ENCODE measurements at regions of chr5 and their contacts with region 1.

Region 1: DNA sequence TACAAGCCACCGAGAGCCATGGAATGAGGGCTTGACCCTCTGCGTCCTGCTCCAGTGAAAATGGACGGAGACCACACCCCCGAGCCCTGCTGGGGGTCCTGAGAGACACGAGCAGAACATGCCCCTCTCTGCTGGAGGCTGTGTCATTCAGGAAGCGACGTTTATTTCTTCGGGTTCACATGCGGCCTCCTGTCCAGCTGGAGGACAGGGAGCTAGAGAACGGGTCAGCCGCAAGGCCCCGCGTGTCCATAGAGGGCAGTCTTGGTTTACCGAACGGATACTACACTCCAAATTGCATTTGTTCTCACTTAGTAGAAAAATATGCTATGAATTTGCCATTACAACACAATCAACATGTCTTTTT is 36.1 kb downstream of the MRPL36 start:
- DNase-seq: peak; percentile 57 to 75
- H3K4me3 ChIP-seq: no peak overlapping the region
- H3K27ac ChIP-seq: no peak overlapping the region
- H3K4me1 ChIP-seq: no peaks in the 10 kb centered on the region
- H3K27me3 ChIP-seq: peaks cover 98% of the 10 kb centered on the region
- CTCF ChIP-seq: peak; percentile 90

Region 2: DNA sequence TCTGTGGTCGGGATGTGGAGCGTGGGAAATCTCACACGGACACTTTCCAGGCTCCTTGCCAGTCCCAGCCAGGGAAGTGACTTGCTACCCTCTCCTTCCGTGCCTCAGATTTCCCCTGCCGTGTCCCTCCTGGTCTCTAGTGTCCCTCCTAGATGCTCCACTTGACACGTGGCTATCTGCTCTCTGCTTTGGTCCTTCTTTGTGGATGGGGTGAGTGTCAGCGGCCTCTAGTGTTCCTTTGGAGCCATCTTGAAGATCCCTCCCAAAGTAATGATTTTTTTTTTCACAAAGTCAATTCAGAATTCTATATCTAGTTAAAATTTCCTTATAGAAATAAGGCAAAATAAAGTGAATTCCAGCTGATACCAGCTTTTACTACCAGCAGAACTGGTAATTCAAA is 81.6 kb before region 1 on chr5:
- CTCF ChIA-PET with region 1: no interaction called
- POLR2A ChIA-PET with region 1: no interaction called
- intact Hi-C with region 1: no loop called
- DNase-seq: no peak
- H3K4me3 ChIP-seq: no peak overlapping the region
- H3K27ac ChIP-seq: no peak overlapping the region
- H3K4me1 ChIP-seq: no peaks in the 10 kb centered on the region
- H3K27me3 ChIP-seq: peaks cover 96% of the 10 kb centered on the region
- CTCF ChIP-seq: peak; percentile 34; the same call in 1 of the 2 replicates

Region 3: DNA sequence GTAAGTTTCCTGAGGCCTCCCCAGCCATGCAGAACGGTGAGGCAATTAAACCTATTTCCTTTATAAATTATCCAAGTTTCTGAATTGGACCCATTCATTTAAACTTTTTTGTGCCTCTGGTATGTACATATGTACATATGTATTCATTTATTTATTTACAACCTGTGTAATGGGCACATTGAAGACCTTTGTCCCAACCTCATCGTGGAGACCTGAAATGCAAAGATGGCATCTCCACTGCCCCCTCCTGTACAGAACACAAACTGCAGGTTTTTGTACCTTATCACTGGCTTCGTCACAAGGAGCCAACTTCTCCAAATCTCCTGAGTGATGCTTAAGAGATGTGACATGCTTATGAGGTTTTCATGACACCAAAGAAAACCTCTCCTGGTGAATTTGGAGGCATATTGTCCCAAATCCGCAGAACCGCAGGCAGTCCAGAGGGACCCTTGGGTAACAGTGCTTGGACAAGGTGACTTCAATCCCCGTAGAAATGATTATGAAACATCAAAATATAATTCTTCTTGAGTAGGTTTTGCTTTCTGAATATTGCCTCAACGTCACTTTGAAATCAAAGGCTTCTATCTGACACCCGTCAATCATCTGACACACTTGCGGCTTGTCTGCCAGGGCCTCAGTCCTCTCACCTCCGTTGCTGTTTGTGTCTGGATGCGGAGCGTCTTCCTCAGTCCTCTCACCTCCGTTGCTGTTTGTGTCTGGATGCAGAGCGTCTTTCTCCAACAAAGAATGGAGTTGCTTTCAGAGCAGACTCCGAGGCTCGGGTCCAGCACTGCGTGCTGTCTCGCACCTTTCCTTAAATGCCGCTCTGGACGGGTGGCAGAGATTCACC is 254.2 kb after region 1 on chr5:
- CTCF ChIA-PET with region 1: no interaction called
- POLR2A ChIA-PET with region 1: no interaction called
- intact Hi-C with region 1: loop called (anchors 2 kb)
- DNase-seq: no peak
- H3K4me3 ChIP-seq: no peak overlapping the region
- H3K27ac ChIP-seq: no peak overlapping the region
- H3K4me1 ChIP-seq: no peaks in the 10 kb centered on the region
- H3K27me3 ChIP-seq: peaks cover 94% of the 10 kb centered on the region
- CTCF ChIP-seq: peak; percentile 64

Region 4: GRCh38 chr5:2038321-2039179 is 275.0 kb after region 1 on chr5:
- CTCF ChIA-PET with region 1: interaction called, 3 read pairs
- POLR2A ChIA-PET with region 1: no interaction called
- intact Hi-C with region 1: loop called (anchors 5 kb)
- DNase-seq: peak in 1 of 2 experiments; percentile 50
- H3K4me3 ChIP-seq: no peak overlapping the region
- H3K27ac ChIP-seq: no peak overlapping the region
- H3K4me1 ChIP-seq: no peaks in the 10 kb centered on the region
- H3K27me3 ChIP-seq: peaks cover 89% of the 10 kb centered on the region
- CTCF ChIP-seq: peak; percentile 44; the same call in 1 of the 2 replicates

Region 5: GRCh38 chr5:2149196-2149541 is 385.6 kb after region 1 on chr5:
- CTCF ChIA-PET with region 1: no interaction called
- POLR2A ChIA-PET with region 1: no interaction called
- intact Hi-C with region 1: loop called (anchors 1 kb)
- DNase-seq: no peak
- H3K4me3 ChIP-seq: no peak overlapping the region
- H3K27ac ChIP-seq: no peak overlapping the region
- H3K4me1 ChIP-seq: no peaks in the 10 kb centered on the region
- H3K27me3 ChIP-seq: peaks cover 69% of the 10 kb centered on the region
- CTCF ChIP-seq: no peak

Measured in PC-9 (cell line).